Activated CD4-positive, alpha-beta memory T cell treated with anti-CD3 and anti-CD28 coated beads for 36 hours (primary cell): ENCODE measurements at regions of chr2 and their contacts with region 1.

Region 1: GRCh38 chr2:10408649-10409579 is 39.2 kb downstream of the ODC1 start:
- DNase-seq: peak; percentile 90
- H3K4me3 Mint-ChIP-seq: peak overlapping the region; percentile 60
- H3K27ac Mint-ChIP-seq: peak overlapping the region; percentile 95
- H3K4me1 Mint-ChIP-seq: peaks cover 45% of the 10 kb centered on the region
- H3K27me3 Mint-ChIP-seq: no peaks in the 10 kb centered on the region

Region 2: DNA sequence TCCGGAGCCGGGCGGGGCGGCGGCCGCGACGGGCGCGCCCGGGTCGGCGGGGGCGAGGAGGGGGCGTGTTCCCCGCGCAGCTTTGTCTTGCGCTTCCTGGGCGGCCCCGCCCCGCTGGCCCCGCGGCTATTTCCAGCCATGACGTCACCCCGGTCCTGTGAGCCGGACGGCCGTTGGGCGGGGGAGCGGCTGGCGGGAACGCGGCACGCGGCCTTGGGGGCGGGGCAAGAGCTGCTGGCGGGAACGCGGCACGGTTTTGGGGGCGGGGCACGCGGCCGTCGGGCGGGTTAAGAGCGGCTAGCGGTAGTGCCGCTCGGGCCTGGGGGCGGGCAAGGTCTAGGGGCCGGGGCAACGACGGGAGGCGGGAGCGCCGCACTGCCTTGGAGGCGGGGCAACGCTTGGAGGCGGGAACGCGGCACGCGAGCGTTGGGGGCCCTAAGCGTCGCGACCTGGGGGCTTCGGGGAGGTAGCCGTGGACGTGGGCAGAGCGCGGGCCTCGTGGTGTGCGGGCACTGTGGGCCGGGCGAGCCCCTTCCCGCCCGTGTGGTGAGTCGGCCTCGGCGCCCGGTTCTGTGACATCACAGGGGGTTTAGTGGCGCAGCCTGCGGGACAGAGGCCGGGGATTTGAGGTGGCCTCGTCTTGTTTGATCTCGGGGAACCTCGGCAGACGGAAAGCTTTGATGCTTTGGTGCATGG is 364.9 kb before region 1 on chr2:
- CTCF ChIA-PET with region 1: interaction called, 10 read pairs
- POLR2A ChIA-PET with region 1: no interaction called
- intact Hi-C with region 1: no loop called
- DNase-seq: peak; percentile 94
- H3K4me3 Mint-ChIP-seq: peak overlapping the region; percentile 64
- H3K27ac Mint-ChIP-seq: peak overlapping the region; percentile 47
- H3K4me1 Mint-ChIP-seq: peaks cover 22% of the 10 kb centered on the region
- H3K27me3 Mint-ChIP-seq: peaks cover 3% of the 10 kb centered on the region

Region 3: DNA sequence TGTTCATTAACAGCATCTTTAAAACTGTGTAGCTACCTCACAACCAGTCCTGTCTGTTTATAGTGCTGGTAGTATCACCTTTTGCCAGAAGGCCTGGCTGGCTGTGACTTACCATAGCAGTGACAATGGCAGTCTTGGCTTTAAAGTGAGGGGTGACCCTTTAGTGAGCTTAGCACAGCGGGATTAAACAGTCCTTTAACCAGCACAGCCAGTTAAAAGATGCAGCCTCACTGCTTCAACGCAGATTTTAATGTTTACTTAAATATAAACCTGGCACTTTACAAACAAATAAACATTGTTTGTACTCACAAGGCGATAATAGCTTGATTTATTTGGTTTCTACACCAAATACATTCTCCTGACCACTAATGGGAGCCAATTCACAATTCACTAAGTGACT is 279.4 kb before region 1 on chr2:
- CTCF ChIA-PET with region 1: interaction called, 97 read pairs
- POLR2A ChIA-PET with region 1: interaction called, 8 read pairs
- intact Hi-C with region 1: loop called (anchors 1 kb)
- DNase-seq: no peak
- H3K4me3 Mint-ChIP-seq: no peak overlapping the region
- H3K27ac Mint-ChIP-seq: no peak overlapping the region
- H3K4me1 Mint-ChIP-seq: peaks cover 49% of the 10 kb centered on the region
- H3K27me3 Mint-ChIP-seq: no peaks in the 10 kb centered on the region

Region 4: GRCh38 chr2:10246370-10246769 is 162.5 kb before region 1 on chr2:
- CTCF ChIA-PET with region 1: interaction called, 12 read pairs
- POLR2A ChIA-PET with region 1: no interaction called
- intact Hi-C with region 1: no loop called
- DNase-seq: no peak
- H3K4me3 Mint-ChIP-seq: no peak overlapping the region
- H3K27ac Mint-ChIP-seq: no peak overlapping the region
- H3K4me1 Mint-ChIP-seq: no peaks in the 10 kb centered on the region
- H3K27me3 Mint-ChIP-seq: no peaks in the 10 kb centered on the region

Region 5: DNA sequence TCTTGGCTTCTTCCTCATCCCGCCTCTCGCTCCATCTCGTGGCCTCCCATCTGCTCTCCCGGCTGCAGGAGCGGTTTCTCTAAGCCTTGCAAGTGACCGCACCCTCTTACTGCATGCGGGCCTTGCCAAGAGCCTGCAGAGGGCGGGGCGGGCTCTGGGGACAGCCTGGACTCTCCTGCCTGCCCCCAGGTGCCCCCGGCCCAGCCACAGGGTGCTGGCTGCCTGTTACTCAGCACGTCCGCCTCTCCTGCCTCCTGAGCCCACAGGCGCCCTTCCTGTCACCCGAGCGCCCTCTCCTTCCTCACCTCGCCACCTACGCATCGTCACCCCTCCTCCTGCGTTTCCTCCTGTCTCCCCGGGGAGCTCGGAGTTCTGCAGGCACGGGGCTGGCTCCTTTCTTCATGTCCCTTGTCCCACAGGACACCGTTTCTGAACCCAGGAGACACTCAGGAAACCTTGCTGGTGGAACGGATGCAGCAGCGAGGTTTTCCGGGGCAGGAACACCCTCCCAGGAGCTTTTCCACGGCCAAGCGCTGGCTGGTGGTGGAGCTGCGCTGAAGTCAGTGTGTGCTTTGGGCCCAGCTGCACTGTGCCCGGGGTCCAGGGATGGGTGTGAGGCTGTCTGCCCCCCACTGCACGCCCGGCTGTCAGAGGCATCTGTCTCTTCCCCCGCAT is 77.8 kb before region 1 on chr2:
- CTCF ChIA-PET with region 1: interaction called, 79 read pairs
- POLR2A ChIA-PET with region 1: interaction called, 34 read pairs
- intact Hi-C with region 1: loop called (anchors 1 kb)
- DNase-seq: peak; percentile 91
- H3K4me3 Mint-ChIP-seq: peak overlapping the region; percentile 86
- H3K27ac Mint-ChIP-seq: peak overlapping the region; percentile 90
- H3K4me1 Mint-ChIP-seq: peaks cover 76% of the 10 kb centered on the region
- H3K27me3 Mint-ChIP-seq: no peaks in the 10 kb centered on the region

Region 6: GRCh38 chr2:10434886-10435819 is 26.2 kb after region 1 on chr2:
- CTCF ChIA-PET with region 1: interaction called, 48 read pairs
- POLR2A ChIA-PET with region 1: no interaction called
- intact Hi-C with region 1: no loop called
- DNase-seq: peak; percentile 80
- H3K4me3 Mint-ChIP-seq: no peak overlapping the region
- H3K27ac Mint-ChIP-seq: no peak overlapping the region
- H3K4me1 Mint-ChIP-seq: peaks cover 12% of the 10 kb centered on the region
- H3K27me3 Mint-ChIP-seq: peaks cover 13% of the 10 kb centered on the region

Region 7: GRCh38 chr2:10487144-10488104 is 78.5 kb after region 1 on chr2:
- CTCF ChIA-PET with region 1: no interaction called
- POLR2A ChIA-PET with region 1: no interaction called
- intact Hi-C with region 1: no loop called
- DNase-seq: peak; percentile 7
- H3K4me3 Mint-ChIP-seq: no peak overlapping the region
- H3K27ac Mint-ChIP-seq: no peak overlapping the region
- H3K4me1 Mint-ChIP-seq: peaks cover 16% of the 10 kb centered on the region
- H3K27me3 Mint-ChIP-seq: peaks cover 4% of the 10 kb centered on the region